ENCODE measurements at regions of chr22 and their contacts with region 1.

Region 1: DNA sequence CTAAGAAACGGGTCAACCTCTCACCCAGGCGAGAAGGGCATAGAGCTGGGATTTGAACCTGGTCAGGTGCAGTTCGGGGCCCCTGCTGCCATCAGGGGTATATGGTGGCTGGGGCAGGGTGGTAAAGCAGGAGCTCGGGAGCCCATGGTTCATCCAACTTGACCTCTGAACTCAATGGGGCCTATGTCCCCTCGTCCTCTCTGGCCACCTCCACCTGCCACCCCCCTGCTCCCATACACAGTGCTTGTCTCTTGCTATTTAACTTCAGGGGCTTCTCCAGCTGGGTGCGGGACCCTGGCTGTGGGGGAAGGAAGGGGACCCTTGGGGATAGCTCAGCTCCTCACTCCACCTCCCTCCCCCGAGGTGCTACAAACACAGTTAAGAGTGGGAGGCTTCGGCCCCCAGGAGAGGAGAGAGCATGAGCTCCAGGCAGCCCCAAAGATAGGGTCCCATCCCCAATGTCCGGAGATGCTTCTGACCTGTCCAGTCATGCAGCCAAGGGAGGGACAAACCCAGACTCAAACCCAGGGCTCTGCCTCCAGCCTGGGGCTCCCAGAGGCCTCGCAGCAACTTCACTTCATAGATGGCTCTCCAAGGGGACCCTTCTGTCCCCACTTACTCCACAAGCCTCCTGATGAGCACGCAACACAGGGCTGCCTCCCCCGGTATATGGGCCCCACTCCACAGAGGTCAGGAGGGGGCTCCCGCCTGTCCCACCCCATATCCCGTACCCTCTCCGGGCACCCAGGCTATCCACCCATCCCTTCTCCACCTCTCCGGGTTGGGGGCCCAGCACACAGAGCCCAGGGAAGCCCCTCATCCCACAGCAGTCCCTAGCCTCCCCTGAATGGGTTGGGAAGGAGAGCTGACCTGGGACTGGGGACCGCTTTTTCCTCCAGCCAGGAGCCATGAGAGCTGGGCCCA is 712 bp downstream of the IL2RB start:
- DNase-seq: peak in 1 of 14 experiments; percentile 35
- ATAC-seq: no peak
- H3K4me3 ChIP-seq: peak overlapping the region; percentile 78
- H3K4me3 Mint-ChIP-seq: peak overlapping the region; percentile 93
- H3K27ac ChIP-seq: peak overlapping the region; percentile 61 to 82
- H3K27ac Mint-ChIP-seq: peak overlapping the region; percentile 97
- H3K4me1 ChIP-seq: peaks cover 63% of the 10 kb centered on the region
- H3K4me1 Mint-ChIP-seq: peaks cover 76% of the 10 kb centered on the region
- H3K27me3 ChIP-seq: no peaks in the 10 kb centered on the region
- H3K27me3 Mint-ChIP-seq: no peaks in the 10 kb centered on the region
- CTCF ChIP-seq: no peak

Region 2: GRCh38 chr22:37112084-37112728 is 36.8 kb before region 1 on chr22:
- CTCF ChIA-PET with region 1: no interaction called
- POLR2A ChIA-PET with region 1: no interaction called
- intact Hi-C with region 1: loop called in 1 of 2 experiments (anchors 5 kb)
- DNase-seq: no peak
- ATAC-seq: no peak
- H3K4me3 ChIP-seq: no peak overlapping the region
- H3K4me3 Mint-ChIP-seq: no peak overlapping the region
- H3K27ac ChIP-seq: no peak overlapping the region
- H3K27ac Mint-ChIP-seq: no peak overlapping the region
- H3K4me1 ChIP-seq: no peaks in the 10 kb centered on the region
- H3K4me1 Mint-ChIP-seq: no peaks in the 10 kb centered on the region
- H3K27me3 ChIP-seq: no peaks in the 10 kb centered on the region
- H3K27me3 Mint-ChIP-seq: no peaks in the 10 kb centered on the region
- CTCF ChIP-seq: no peak

Region 3: DNA sequence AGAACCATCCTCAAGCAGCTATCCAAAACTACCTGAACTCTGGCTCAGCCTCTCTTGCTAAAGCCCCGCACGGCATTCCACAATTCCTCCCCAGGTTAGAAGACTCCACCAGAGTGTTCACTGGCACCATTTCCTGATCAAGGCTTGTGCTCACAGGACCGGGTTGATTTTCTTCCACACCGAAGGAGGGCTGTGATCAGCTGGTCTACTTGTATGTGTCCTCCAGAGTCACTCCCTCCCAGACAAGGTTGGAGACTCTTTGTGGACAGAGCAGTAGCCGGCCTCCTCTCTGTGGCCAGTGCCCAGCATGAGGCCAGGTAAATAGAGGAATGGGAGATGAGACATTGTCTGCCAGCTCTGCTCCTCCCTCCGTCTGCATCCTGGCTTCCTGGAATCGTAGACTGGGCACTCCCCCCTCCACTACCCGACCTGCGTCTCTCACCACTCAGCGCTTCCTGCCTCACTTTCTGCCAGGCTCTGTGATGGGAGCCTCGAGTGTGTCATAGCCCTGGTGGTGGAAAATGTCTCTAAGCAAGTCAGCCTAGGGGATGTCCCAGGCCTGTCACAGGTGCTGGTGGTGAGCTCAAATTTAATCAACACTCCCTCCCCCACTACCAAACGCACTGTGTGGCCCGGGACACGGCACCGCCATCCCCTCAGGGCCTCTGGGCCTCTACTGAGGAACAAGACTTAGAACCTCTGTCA is 27.0 kb before region 1 on chr22:
- CTCF ChIA-PET with region 1: interaction called, 24 read pairs
- POLR2A ChIA-PET with region 1: interaction called, 44 read pairs
- intact Hi-C with region 1: loop called (anchors 1 to 2 kb)
- DNase-seq: peak; percentile 78 to 99 (median 88)
- ATAC-seq: peak; percentile 95
- H3K4me3 ChIP-seq: peak overlapping the region; percentile 30
- H3K4me3 Mint-ChIP-seq: peak overlapping the region; percentile 84
- H3K27ac ChIP-seq: peak overlapping the region; percentile 96
- H3K27ac Mint-ChIP-seq: peak overlapping the region; percentile 95
- H3K4me1 ChIP-seq: peaks cover 61% of the 10 kb centered on the region
- H3K4me1 Mint-ChIP-seq: peaks cover 52% of the 10 kb centered on the region
- H3K27me3 ChIP-seq: no peaks in the 10 kb centered on the region
- H3K27me3 Mint-ChIP-seq: no peaks in the 10 kb centered on the region
- CTCF ChIP-seq: peak; percentile 35

Measured in CD4-positive, alpha-beta T cell (primary cell).